WTC11 (cell line): ENCODE measurements at regions of chr7 and their contacts with region 1.

Region 1: GRCh38 chr7:100171087-100171681 is 2.8 kb upstream of the GAL3ST4 start:
- DNase-seq: peak; percentile 80
- ATAC-seq: peak; percentile 50
- H3K4me3 Mint-ChIP-seq: peak overlapping the region; percentile 61
- H3K27ac Mint-ChIP-seq: no peak overlapping the region
- H3K4me1 Mint-ChIP-seq: peaks cover 61% of the 10 kb centered on the region
- H3K27me3 Mint-ChIP-seq: peaks cover 27% of the 10 kb centered on the region
- CTCF ChIP-seq: no peak

Region 2: DNA sequence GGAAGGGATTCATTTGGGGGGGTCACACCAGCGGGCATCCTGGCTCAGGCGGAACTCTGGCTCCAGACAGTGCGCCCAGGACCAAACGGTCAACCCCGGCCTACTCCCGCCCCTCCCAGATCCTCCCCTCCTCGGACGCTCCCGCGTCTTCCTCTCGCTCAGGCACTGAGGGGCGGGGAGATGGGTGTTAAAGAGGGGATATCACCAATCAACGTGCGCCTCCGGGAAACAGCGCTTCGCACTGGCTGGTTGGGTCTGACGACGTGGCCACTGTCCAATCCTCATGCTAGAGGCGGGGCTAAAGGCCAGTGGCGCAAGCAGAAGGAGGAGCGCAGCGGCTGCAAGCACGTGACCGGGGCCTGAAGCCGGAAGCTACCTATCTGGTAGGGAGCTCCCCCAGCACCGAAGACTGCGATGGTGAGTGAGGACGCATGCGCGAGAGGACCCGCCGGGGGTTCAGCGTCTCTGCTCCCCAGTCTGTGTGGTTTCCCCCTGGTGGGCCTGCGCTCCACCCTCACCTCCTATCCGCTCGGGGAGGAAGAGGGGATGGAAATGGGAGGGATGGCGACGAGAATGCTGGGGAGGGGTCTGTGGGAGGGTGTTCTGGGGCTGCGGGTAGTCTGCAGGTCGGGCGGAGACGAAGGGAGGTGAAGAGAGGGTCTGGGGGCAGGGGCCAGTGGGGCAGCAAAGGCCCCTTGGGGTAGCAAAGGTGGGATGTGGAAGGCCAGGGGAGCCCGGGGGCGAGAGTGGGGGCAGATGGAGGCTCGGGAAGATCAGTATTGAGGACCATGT is 22.4 kb before region 1 on chr7 and contains the start of gene LAMTOR4:
- CTCF ChIA-PET with region 1: interaction called, 17 read pairs
- POLR2A ChIA-PET with region 1: interaction called, 5 read pairs
- DNase-seq: peak; percentile 99
- ATAC-seq: peak; percentile 98
- H3K4me3 Mint-ChIP-seq: peak within 1 kb of the TSS; percentile 99
- H3K27ac Mint-ChIP-seq: peak within 1 kb of the TSS; percentile 99
- H3K4me1 Mint-ChIP-seq: peaks cover 20% of the 10 kb centered on the region
- H3K27me3 Mint-ChIP-seq: peaks cover 3% of the 10 kb centered on the region; the same call in 1 of the 2 replicates
- CTCF ChIP-seq: no peak
- total RNA-seq, gene LAMTOR4: 199 to 235 TPM (median 227 TPM) in 3 replicates

Region 3: GRCh38 chr7:100158229-100159098 is 12.7 kb before region 1 on chr7 and contains the start of gene TRAPPC14:
- CTCF ChIA-PET with region 1: interaction called, 14 read pairs
- POLR2A ChIA-PET with region 1: interaction called, 5 read pairs
- DNase-seq: peak; percentile 97
- ATAC-seq: peak; percentile 65
- H3K4me3 Mint-ChIP-seq: peak within 1 kb of the TSS; percentile 75
- H3K27ac Mint-ChIP-seq: peak within 1 kb of the TSS; percentile 87
- H3K4me1 Mint-ChIP-seq: peaks cover 38% of the 10 kb centered on the region
- H3K27me3 Mint-ChIP-seq: no peaks in the 10 kb centered on the region
- CTCF ChIP-seq: no peak
- total RNA-seq, gene TRAPPC14: 25.0 to 28.0 TPM (median 25.1 TPM) in 3 replicates

Region 4: DNA sequence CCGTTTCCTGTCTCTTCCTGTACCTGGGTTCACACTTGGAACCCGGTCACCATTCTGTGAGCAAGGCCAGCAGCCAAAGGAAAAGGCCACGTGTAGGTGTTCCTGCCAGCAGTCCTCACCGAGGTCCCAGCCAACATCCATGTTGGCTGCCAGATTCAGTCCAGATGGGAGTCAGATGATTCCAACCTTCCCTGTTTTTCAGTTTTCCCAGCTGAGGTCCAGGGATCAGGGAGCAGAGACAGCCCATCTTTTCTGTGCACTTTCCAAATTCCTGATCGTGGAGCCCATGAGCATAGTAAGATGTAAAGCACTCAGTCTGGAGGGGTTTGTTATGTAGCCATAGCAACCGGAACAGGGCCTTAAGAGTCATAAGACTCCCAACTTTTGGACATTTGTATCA is 44.7 kb after region 1 on chr7:
- CTCF ChIA-PET with region 1: interaction called, 13 read pairs
- POLR2A ChIA-PET with region 1: no interaction called
- DNase-seq: no peak
- ATAC-seq: no peak
- H3K4me3 Mint-ChIP-seq: no peak overlapping the region
- H3K27ac Mint-ChIP-seq: no peak overlapping the region
- H3K4me1 Mint-ChIP-seq: peaks cover 3% of the 10 kb centered on the region; the same call in 1 of the 2 replicates
- H3K27me3 Mint-ChIP-seq: peaks cover 47% of the 10 kb centered on the region
- CTCF ChIP-seq: no peak